ENCODE measurements at regions of chr2 and their contacts with region 1.

Region 1: GRCh38 chr2:197198890-197199289 is 111.7 kb downstream of the ANKRD44 start:
- DNase-seq: no peak
- ATAC-seq: no peak
- H3K4me3 ChIP-seq: no peak overlapping the region
- H3K27ac ChIP-seq: no peak overlapping the region
- H3K4me1 ChIP-seq: peaks cover 2% of the 10 kb centered on the region
- H3K27me3 ChIP-seq: no peaks in the 10 kb centered on the region
- CTCF ChIP-seq: no peak
- POLR2A ChIP-seq: no peak
- RAD21 ChIP-seq: no peak

Region 2: GRCh38 chr2:197286805-197287598 is 88.1 kb after region 1 on chr2:
- CTCF ChIA-PET with region 1: no interaction called
- POLR2A ChIA-PET with region 1: no interaction called
- dilution Hi-C with region 1: no loop called
- in situ Hi-C with region 1: no loop called
- intact Hi-C with region 1: no loop called
- DNase-seq: peak; percentile 97
- ATAC-seq: peak; percentile 99
- H3K4me3 ChIP-seq: no peak overlapping the region
- H3K27ac ChIP-seq: peak overlapping the region; percentile 41; the same call in 1 of the 2 replicates
- H3K4me1 ChIP-seq: peaks cover 4% of the 10 kb centered on the region
- H3K27me3 ChIP-seq: no peaks in the 10 kb centered on the region
- CTCF ChIP-seq: no peak
- POLR2A ChIP-seq: no peak
- RAD21 ChIP-seq: no peak

Region 3: DNA sequence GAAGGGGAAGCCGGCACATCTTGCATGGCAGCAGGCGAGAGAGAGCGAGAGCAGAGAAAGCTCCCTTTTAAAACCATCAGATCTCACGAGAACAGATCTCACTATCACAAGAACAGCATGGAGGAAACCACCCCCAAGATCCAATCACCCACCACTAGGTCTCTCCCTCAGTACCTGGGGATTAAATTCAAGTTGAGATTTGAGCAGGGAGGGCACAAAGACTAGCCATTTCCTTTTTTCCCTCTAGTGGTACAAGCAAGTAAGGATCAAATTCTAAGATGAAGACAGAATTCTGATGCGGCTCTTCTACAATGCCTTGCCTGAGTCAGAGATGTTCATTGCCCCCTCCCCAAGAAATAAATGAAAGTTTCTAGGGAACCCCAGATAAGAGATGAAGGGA is 157.2 kb after region 1 on chr2:
- CTCF ChIA-PET with region 1: no interaction called
- POLR2A ChIA-PET with region 1: no interaction called
- dilution Hi-C with region 1: no loop called
- in situ Hi-C with region 1: no loop called
- intact Hi-C with region 1: loop called (anchors 5 kb)
- DNase-seq: no peak
- ATAC-seq: peak; percentile 27; the same call in 1 of the 2 replicates
- H3K4me3 ChIP-seq: no peak overlapping the region
- H3K27ac ChIP-seq: no peak overlapping the region
- H3K4me1 ChIP-seq: no peaks in the 10 kb centered on the region
- H3K27me3 ChIP-seq: no peaks in the 10 kb centered on the region
- CTCF ChIP-seq: peak; percentile 29
- POLR2A ChIP-seq: no peak
- RAD21 ChIP-seq: peak; percentile 36

Measured in IMR-90 (cell line).